ENCODE measurements at regions of chr7 and their contacts with region 1.

Region 1: DNA sequence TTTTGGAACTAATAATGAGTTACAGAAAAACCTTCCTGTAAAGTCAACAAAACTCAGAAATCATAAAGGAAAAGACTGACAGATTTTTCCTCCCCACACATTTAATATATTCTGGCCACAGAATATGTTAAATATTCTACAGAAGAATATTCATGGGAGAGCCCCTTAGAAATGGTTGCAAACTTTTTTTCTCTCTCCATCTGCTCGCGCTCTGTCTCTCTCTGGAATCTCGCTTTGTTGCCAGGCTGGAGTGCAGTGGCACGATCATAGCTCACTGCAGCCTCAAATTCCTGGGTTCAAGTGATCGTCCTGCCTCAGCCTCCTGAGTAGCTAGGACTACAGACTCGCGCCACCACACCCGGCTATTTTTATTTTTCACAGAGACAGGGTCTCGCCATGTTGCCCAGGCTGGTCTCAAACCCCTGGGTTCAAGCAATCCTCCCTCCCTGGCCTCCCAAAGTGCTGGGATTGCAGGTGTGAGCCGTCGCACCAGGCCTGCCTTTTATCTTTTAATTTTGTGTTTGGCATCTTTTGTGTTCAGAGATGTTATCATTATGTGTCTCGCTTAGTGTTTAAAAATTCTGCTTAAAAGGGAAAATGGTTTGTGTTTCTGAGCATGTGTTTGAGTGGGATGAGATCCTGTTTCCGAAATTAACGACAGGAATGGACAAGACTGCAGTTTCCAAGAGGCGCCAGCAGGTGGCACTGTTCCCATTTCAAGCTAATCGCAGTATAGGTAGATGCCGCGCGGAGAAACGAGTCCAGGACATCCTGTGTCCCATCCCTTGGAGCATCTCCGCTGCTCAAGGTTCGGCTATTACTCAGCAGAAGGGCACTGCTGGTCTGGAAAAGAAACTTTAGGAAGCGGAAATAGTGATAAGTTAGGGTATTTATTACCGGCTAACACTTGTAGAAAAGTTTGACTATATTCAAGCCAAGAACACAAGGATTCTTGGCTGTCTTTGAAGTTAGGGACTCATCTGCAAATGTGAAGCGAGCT is 23.1 kb upstream of the ST7 start:
- DNase-seq: peak; percentile 91
- ATAC-seq: peak; percentile 88

Region 2: GRCh38 chr7:116886543-116887156 is 43.6 kb before region 1 on chr7:
- intact Hi-C with region 1: no loop called
- DNase-seq: no peak
- ATAC-seq: peak; percentile 28

Region 3: GRCh38 chr7:116984917-116985316 is 54.7 kb after region 1 on chr7:
- intact Hi-C with region 1: loop called (anchors 5 kb)
- DNase-seq: no peak
- ATAC-seq: no peak

Region 4: DNA sequence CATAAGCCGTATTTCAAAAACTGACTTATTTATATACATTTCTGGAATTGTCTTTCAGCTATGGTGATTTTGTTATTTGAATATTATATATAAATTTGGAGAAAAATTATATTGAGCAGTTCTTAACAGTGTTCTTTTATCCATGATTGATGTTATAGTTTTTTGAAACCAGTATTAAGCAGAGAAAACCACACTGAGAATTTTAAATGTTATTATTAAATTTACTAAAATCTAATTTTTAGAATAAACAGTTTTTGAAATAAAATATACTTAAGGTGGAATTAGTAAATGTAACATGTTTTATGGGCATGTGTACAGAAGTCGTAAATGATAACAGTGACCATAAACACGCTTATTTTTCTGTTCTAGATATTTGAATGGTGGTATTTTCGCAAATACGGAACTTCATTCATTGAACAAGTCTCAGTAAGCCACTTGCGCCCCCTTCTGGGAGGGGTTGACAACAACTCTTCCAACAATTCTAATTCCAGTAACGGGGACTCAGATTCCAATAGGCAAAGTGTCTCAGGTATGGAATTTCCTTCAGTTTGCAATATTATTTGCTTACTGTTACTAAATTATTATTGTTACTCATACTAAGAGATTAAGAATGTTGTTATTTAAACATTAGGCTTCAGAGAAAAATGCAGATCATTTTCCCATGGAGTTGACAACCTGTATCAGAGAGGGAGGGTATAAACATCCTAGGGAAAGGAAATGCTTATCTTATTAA is 189.1 kb after region 1 on chr7:
- intact Hi-C with region 1: loop called (anchors 2 kb)
- DNase-seq: peak; percentile 79
- ATAC-seq: no peak

Region 5: GRCh38 chr7:117127585-117128168 is 197.5 kb after region 1 on chr7:
- intact Hi-C with region 1: loop called (anchors 2 kb)
- DNase-seq: no peak
- ATAC-seq: no peak

Measured in Right ventricle myocardium inferior (tissue), 1 donor.